ENCODE measurements at regions of chr20 and their contacts with region 1.

Region 1: GRCh38 chr20:7387638-7388193 is 552.5 kb downstream of the HAO1 start:
- DNase-seq: no peak
- H3K4me3 ChIP-seq: no peak overlapping the region
- CTCF ChIP-seq: no peak

Region 2: DNA sequence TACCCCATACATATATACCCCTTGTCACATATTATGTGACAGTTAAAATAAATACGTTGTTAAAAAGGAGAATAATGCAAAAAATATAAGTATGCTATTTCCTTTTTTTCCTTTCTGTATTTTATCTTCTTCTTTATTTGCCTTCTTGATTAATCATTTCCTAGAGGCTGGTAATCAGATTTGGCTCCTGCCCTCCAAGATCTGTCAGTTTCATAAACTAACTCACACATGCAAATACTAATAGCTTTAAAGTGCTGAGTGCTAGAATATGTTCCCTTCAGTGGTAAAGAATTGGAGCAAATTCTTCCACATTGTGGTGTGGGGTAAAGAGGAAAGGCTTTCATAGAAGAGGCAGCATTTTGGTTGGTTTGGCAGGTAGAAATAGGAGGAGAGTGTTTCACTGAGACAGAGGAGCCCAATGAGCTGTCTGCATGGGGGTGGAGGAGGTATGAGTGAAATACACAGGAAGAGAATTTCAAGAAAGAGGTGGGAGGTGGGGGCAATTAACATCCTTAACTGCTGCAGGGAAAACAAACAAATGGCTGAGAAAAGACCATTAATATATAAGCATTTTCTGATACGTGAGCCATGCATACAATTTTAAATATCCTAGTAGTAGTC is 96.3 kb before region 1 on chr20:
- in situ Hi-C with region 1: loop called (anchors 5 kb)
- DNase-seq: no peak
- H3K4me3 ChIP-seq: no peak overlapping the region
- CTCF ChIP-seq: no peak

Region 3: DNA sequence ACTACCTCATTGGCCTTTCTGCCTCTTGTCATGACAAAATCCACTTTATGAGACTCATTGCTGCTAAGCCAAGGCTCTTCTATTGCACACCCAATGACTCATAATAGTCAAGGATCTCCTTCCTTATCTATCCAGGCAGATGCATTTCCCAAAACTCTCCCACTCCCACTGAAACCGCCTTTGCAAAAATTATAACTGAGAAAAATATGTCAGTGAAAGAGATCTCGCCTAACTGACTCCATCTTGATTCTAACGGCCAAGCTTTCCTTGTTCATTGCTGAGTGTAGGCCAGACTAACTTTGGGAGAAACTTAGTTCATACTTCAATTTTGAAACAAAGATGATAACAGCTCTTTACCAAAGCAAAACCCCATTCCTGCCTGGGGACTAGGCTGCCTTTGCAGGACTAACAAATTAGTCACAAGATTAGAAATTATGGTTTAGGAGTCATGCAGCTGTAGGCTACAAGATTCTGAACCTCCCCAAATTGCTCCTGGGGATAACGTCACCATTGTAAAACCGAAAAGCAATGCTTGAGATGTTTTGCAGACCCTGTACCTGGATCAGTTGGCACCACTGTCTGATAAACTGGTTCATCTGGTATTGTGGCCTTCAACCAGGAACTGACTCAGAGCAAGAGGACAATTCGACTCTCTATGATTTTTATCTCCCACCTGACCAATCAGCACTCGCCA is 505.4 kb after region 1 on chr20:
- in situ Hi-C with region 1: no loop called
- DNase-seq: no peak
- H3K4me3 ChIP-seq: no peak overlapping the region
- CTCF ChIP-seq: no peak

Measured in astrocyte of the cerebellum (primary cell).